ENCODE measurements at regions of chr5 and their contacts with region 1.

Region 1: DNA sequence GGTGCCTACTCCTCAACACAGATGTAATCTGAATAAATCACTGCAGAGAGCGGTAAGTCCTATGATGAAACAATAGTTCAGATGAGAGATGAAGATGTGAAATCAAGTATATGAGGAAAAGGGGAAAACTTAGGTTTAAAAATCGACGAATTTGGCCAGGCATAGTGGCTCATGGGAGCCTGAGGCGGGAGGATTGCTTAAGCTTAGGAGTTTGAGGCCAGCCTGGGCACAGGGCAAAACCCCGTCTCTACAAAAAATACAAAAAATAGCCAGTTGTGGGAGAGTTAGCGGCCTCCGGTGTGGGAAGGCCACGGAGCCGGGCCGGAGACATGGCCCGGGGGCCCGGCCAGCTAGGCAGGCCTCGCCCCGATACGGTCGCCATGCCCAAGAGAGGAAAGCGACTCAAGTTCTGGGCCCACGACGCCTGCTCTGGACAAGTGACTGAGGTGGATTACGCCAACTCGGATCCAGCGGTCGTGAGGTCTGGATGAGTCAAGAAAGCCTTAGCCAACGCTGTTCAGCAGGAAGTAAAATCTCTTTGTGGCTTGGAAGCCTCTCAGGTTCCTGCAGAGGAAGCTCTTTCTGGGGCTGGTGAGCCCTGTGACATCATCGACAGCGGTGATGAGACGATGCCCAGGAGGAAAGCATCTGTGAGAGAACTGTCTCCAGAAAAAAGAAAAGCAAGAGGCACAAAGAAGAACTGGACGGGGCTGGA is 62.8 kb upstream of the SUB1 start:
- DNase-seq: no peak
- H3K4me3 ChIP-seq: no peak overlapping the region
- H3K27ac ChIP-seq: no peak overlapping the region
- H3K4me1 ChIP-seq: no peaks in the 10 kb centered on the region
- H3K27me3 ChIP-seq: no peaks in the 10 kb centered on the region
- CTCF ChIP-seq: no peak
- POLR2A ChIP-seq: no peak

Region 2: DNA sequence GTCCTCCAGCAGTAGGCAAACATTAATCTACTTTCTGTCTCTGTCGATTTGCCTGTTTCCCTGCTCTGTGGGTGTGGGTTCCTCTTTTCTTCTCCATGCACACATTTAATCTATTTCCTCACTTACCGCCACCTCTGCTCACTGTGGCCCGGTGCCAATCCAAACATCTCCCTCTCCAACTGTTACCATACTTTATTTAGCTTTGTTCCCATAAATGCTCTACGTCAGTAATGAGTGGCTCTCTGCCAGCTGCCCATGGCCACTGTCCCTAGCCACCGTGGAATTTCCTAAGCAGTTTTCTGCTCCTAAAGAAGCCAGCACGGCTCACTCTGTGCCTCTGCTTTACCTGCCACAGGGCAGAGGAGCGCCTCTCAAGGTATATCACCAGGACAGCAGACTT is 329.0 kb before region 1 on chr5:
- intact Hi-C with region 1: no loop called
- DNase-seq: no peak
- H3K4me3 ChIP-seq: no peak overlapping the region
- H3K27ac ChIP-seq: peak overlapping the region; percentile 30
- H3K4me1 ChIP-seq: peaks cover 16% of the 10 kb centered on the region
- H3K27me3 ChIP-seq: no peaks in the 10 kb centered on the region
- CTCF ChIP-seq: no peak
- POLR2A ChIP-seq: no peak

Region 3: GRCh38 chr5:32511776-32512374 is 10.7 kb before region 1 on chr5:
- intact Hi-C with region 1: loop called (anchors 1 kb)
- DNase-seq: no peak
- H3K4me3 ChIP-seq: no peak overlapping the region
- H3K27ac ChIP-seq: no peak overlapping the region
- H3K4me1 ChIP-seq: peaks cover 13% of the 10 kb centered on the region
- H3K27me3 ChIP-seq: no peaks in the 10 kb centered on the region
- CTCF ChIP-seq: no peak
- POLR2A ChIP-seq: no peak